PC-3 (cell line): ENCODE measurements at regions of chr19 and their contacts with region 1.

Region 1: GRCh38 chr19:49200238-49200862 is 42.8 kb downstream of the TRPM4 start:
- DNase-seq: peak; percentile 40
- ATAC-seq: no peak
- H3K4me3 ChIP-seq: no peak overlapping the region
- H3K27ac ChIP-seq: no peak overlapping the region
- H3K4me1 ChIP-seq: peaks cover 19% of the 10 kb centered on the region
- H3K27me3 ChIP-seq: no peaks in the 10 kb centered on the region
- CTCF ChIP-seq: no peak

Region 2: DNA sequence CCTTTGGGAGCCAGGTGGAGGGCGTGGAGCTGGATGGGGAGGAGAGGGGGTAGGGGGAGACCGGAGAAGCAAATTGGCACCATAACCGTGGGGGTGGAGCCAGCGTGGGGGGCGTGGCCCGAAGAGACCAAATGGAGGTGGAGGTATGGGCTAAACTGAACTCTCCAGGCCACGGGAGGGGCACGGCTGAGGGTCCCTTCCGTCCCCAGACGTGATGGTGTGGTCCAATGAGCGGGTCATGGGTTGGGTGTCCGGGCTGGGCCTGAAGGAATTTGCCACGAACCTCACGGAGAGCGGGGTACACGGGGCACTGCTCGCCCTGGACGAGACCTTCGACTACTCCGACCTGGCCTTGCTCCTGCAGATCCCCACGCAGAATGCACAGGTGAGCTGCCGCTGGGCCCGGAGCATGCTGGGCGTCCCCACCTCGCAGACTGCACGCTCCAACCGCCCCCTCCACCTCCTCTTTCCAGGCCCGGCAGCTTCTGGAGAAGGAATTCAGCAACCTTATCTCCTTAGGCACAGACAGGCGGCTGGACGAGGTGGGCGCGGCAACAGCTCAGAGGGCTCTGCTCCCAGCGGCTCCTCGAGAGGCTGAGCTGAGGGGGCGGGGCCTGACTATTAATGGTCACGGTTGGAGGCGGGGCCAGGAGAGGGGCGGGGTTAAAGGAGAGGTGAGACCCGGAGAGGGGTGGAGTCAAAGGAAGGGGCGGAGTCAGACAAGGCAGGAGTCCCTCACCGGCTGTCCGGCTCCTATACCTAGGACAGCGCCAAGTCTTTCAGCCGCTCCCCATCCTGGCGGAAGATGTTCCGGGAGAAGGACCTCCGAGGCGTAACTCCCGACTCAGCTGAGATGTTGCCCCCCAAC is 51.3 kb before region 1 on chr19:
- CTCF ChIA-PET with region 1: interaction called, 11 read pairs
- POLR2A ChIA-PET with region 1: interaction called, 5 read pairs
- intact Hi-C with region 1: loop called (anchors 1 kb)
- DNase-seq: peak; percentile 99
- ATAC-seq: peak; percentile 70
- H3K4me3 ChIP-seq: peak overlapping the region; percentile 71
- H3K27ac ChIP-seq: peak overlapping the region; percentile 44; the same call in 1 of the 2 replicates
- H3K4me1 ChIP-seq: peaks cover 25% of the 10 kb centered on the region
- H3K27me3 ChIP-seq: no peaks in the 10 kb centered on the region
- CTCF ChIP-seq: no peak

Region 3: DNA sequence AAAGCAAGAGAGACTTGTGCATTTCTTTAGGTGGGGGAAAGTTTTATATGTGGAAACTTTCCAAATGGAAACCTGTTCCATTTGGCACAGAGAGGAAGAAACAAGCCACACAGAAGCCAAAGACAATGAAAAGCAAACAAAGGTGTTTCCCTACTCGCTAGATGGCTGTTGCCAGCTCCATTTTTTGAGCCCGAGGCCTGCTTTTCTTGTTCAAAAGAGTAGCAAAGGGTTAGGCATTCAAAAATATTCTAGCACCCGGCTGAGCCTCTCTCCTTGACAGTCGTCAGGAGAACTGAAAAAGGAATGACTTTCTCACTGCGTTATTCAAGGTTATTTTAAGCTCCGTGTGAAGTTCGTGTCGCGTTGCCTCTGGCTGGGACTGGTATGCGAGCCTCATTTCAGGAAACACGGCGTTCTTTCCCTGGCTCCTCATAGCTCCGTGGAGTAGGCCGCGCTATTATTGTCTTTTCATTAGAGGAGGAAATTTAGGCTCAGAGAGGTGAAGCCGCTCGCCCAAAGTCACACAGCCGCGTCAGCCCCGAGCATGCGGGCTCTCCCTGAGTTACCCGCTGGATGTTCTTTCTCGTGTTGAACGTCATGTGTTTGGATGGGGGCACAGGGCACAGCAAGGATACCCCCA is 35.1 kb before region 1 on chr19:
- CTCF ChIA-PET with region 1: interaction called, 6 read pairs
- POLR2A ChIA-PET with region 1: no interaction called
- intact Hi-C with region 1: loop called (anchors 1 kb)
- DNase-seq: peak; percentile 71
- ATAC-seq: peak; percentile 66
- H3K4me3 ChIP-seq: no peak overlapping the region
- H3K27ac ChIP-seq: peak overlapping the region; percentile 27
- H3K4me1 ChIP-seq: peaks cover 10% of the 10 kb centered on the region
- H3K27me3 ChIP-seq: no peaks in the 10 kb centered on the region
- CTCF ChIP-seq: no peak

Region 4: GRCh38 chr19:49231389-49231788 is 31.0 kb after region 1 on chr19:
- CTCF ChIA-PET with region 1: no interaction called
- POLR2A ChIA-PET with region 1: no interaction called
- intact Hi-C with region 1: no loop called
- DNase-seq: no peak
- ATAC-seq: no peak
- H3K4me3 ChIP-seq: no peak overlapping the region
- H3K27ac ChIP-seq: no peak overlapping the region
- H3K4me1 ChIP-seq: no peaks in the 10 kb centered on the region
- H3K27me3 ChIP-seq: no peaks in the 10 kb centered on the region
- CTCF ChIP-seq: no peak

Region 5: DNA sequence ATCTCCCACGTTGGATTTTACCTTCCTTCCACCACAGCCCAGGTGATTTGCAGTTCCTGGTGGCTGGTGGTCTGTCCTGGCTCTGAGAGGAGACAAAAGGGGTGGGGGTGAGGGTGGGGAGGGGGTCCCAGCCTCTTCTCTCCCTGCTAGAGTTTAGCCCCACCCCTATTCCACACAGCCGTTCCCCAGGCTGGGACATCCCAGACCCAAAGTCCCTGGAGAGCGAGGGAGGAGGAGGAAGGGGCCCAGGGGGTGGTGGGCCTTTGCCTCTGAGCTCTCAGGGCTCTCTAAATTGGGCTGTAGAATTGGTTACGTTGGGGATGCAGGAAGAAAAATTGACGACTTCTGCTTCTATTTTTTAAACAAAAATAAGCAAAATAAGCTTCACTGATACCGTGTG is 42.8 kb after region 1 on chr19:
- CTCF ChIA-PET with region 1: no interaction called
- POLR2A ChIA-PET with region 1: no interaction called
- intact Hi-C with region 1: no loop called
- DNase-seq: no peak
- ATAC-seq: no peak
- H3K4me3 ChIP-seq: no peak overlapping the region
- H3K27ac ChIP-seq: no peak overlapping the region
- H3K4me1 ChIP-seq: no peaks in the 10 kb centered on the region
- H3K27me3 ChIP-seq: no peaks in the 10 kb centered on the region
- CTCF ChIP-seq: no peak